H1 (cell line): ENCODE measurements at regions of chr10 and their contacts with region 1.

Region 1: GRCh38 chr10:64142395-64142794 is 621.2 kb downstream of the REEP3 start:
- DNase-seq: no peak
- H3K4me3 ChIP-seq: no peak overlapping the region
- H3K27ac ChIP-seq: no peak overlapping the region
- H3K4me1 ChIP-seq: no peaks in the 10 kb centered on the region
- H3K27me3 ChIP-seq: no peaks in the 10 kb centered on the region
- CTCF ChIP-seq: no peak
- EP300 ChIP-seq: no peak
- POLR2A ChIP-seq: no peak
- RAD21 ChIP-seq: no peak

Region 2: DNA sequence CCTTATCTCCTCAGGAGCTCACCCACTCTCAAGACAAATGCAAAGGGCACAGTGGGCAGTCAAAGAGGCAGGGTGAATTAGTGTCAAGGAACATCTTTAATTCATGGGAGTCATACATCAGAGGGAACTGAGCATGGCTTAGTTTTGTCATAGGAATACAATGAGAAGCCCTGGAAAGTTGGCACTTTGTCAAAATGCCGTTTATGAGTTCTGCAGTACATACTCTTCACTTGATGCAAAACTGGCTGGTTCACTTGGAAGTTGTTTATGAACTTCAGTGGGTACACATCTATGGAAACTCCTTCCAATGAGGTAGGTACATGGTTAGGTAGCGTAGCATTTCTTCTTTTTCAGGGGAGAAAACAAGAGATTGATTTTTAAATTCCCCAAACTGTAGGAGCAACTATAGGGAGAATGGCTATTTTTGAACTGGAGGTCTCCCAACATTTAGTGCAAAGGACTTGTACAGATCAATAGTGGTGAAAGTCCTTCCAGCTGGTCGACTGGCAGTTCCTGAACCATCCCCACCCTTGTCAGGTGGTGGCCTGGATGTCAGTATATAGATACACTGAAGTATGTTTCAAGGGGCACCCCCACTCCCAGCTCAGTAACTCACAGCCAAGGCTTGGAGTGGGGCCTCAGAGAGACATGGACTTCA is 40.7 kb before region 1 on chr10:
- CTCF ChIA-PET with region 1: no interaction called
- POLR2A ChIA-PET with region 1: no interaction called
- DNase-seq: no peak
- H3K4me3 ChIP-seq: no peak overlapping the region
- H3K27ac ChIP-seq: no peak overlapping the region
- H3K4me1 ChIP-seq: no peaks in the 10 kb centered on the region; a peak in 1 of 7 replicates
- H3K27me3 ChIP-seq: no peaks in the 10 kb centered on the region
- CTCF ChIP-seq: no peak
- EP300 ChIP-seq: no peak
- POLR2A ChIP-seq: no peak
- RAD21 ChIP-seq: no peak

Region 3: DNA sequence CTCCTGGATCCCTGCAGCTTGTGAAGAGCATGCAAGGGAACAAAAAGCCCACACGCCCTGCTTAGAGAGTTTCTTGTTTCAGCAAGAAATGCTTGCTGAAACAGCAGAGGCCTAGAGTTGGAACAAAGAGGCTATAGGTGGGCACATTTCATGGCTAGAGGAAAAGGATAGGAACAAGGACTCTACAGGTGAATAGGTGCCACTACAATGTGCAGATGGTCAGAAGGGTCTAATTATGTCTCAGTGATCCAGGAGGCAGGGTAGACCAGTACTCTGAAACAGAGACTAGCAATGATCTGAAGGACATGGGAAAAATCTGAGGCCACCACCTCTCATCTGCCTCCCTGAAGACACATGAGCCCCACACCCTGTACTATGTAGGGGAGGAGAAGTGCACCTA is 12.2 kb before region 1 on chr10:
- CTCF ChIA-PET with region 1: interaction called, 19 read pairs
- POLR2A ChIA-PET with region 1: no interaction called
- DNase-seq: no peak
- H3K4me3 ChIP-seq: no peak overlapping the region
- H3K27ac ChIP-seq: no peak overlapping the region
- H3K4me1 ChIP-seq: peaks cover 0 to 2% (median 1%) of the 10 kb centered on the region in 4 experiments; a peak in 1 of 7 replicates
- H3K27me3 ChIP-seq: no peaks in the 10 kb centered on the region
- CTCF ChIP-seq: peak in 1 of 3 experiments; percentile 39; a peak in 1 of 4 replicates
- EP300 ChIP-seq: no peak
- POLR2A ChIP-seq: no peak
- RAD21 ChIP-seq: peak in 1 of 2 experiments; percentile 23; a peak in 1 of 4 replicates